ENCODE measurements at regions of chr1 and their contacts with region 1.

Region 1: GRCh38 chr1:52726265-52727113 is at the start of gene ZYG11B:
- DNase-seq: peak; percentile 93 to 99 (median 98)
- ATAC-seq: peak; percentile 97
- H3K4me3 ChIP-seq: peak within 1 kb of the TSS; percentile 79
- H3K27ac ChIP-seq: peak within 1 kb of the TSS; percentile 71
- H3K4me1 ChIP-seq: peaks cover 11 to 15% of the 10 kb centered on the region in 2 experiments; a peak in 4 of 5 replicates
- H3K27me3 ChIP-seq: no peaks in the 10 kb centered on the region
- CTCF ChIP-seq: 0 out of 6 replicates have a peak, but pooled peaks of 1 of the 3 experiments have one; percentile 6
- EP300 ChIP-seq: no peak
- POLR2A ChIP-seq: peak; percentile 82
- RAD21 ChIP-seq: no peak
- polyA plus RNA-seq, gene ZYG11B: 4.9 to 6.1 TPM

Region 2: GRCh38 chr1:52691821-52692220 is 34.7 kb before region 1 on chr1:
- CTCF ChIA-PET with region 1: no interaction called
- POLR2A ChIA-PET with region 1: no interaction called
- in situ Hi-C with region 1: no loop called
- intact Hi-C with region 1: no loop called
- DNase-seq: no peak
- ATAC-seq: no peak
- H3K4me3 ChIP-seq: no peak overlapping the region
- H3K27ac ChIP-seq: no peak overlapping the region
- H3K4me1 ChIP-seq: peaks cover 0 to 2% of the 10 kb centered on the region in 2 experiments; a peak in 2 of 5 replicates
- H3K27me3 ChIP-seq: no peaks in the 10 kb centered on the region
- CTCF ChIP-seq: no peak
- EP300 ChIP-seq: no peak
- POLR2A ChIP-seq: no peak
- RAD21 ChIP-seq: no peak

Region 3: DNA sequence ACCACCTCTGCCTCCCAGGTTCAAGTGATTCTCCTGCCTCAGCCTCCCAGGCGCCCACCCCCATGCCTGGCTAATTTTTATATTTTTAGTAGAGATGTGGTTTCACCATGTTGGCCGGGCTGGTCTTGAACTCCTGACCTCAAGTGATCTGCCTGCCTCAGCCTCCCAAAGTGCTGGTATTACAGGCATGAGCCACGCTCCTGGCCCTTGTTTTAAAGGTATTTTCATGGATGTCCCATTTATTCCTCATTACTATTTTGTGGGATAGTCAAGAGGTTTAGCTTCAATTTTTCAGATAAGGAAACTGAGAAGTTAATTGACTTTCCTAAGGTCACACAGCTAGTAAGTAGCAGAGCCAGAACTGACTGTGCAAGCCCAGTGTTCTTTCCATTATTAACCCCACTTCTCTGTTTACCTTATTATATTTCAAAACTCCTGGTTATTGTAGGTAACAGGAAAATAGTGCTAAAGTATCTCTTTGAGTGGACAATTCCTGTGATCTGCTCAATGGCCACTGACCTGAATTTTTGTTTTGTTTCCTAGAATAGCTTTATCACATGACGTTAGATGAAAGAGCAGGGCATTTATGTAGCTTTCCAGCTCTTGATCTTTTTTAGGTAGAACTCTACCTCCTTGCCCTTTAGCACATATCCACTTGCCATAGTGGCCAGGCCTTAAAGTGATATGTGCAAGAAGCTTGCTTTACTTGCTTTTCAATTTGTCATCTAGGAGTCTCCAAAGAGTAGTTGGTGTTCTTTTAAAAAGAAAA is 13.4 kb after region 1 on chr1:
- CTCF ChIA-PET with region 1: no interaction called
- POLR2A ChIA-PET with region 1: interaction called, 15 read pairs
- in situ Hi-C with region 1: no loop called
- intact Hi-C with region 1: no loop called
- DNase-seq: no peak
- ATAC-seq: no peak
- H3K4me3 ChIP-seq: no peak overlapping the region
- H3K27ac ChIP-seq: no peak overlapping the region
- H3K4me1 ChIP-seq: peaks cover 12 to 13% of the 10 kb centered on the region in 2 experiments; a peak in 4 of 5 replicates
- H3K27me3 ChIP-seq: no peaks in the 10 kb centered on the region
- CTCF ChIP-seq: no peak
- EP300 ChIP-seq: no peak
- POLR2A ChIP-seq: no peak
- RAD21 ChIP-seq: no peak

Region 4: DNA sequence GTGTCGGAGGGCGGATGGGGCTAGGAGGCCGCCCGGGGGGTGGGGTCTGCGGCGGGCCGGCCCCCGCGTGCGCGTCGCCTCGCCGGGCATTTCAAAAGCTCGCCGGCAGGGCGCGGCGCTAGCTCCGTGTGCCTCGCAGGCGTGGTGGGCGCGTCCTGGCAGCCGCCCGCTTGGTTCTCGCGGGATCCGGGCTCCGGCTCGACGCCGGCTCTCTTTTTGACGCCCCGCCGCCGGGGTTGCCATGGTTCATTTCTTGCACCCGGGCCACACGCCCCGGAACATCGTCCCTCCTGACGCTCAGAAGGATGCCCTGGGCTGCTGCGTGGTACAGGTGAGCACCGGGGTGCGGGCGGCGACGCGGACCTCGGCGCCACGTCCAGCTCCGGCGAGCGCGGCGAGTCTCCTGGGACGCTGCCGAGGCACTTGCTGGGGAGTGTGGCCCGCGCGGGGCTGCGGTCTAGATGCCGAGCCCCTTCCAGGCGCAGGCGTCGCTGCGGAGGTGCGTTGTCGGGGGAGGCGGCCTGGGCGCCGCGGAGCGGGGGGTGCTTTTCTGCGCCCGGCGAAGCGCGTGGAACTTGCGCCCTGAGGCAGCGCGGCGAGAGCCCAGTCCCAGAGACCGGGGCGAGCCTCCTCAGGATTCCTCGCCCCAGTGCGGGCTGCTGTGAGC is 116.3 kb after region 1 on chr1 and contains the start of gene ZYG11A:
- CTCF ChIA-PET with region 1: no interaction called
- POLR2A ChIA-PET with region 1: interaction called, 3 read pairs
- in situ Hi-C with region 1: no loop called
- intact Hi-C with region 1: loop called (anchors 10 kb)
- DNase-seq: peak; percentile 95 to 97 (median 96)
- ATAC-seq: peak; percentile 91
- H3K4me3 ChIP-seq: peak within 1 kb of the TSS; percentile 66
- H3K27ac ChIP-seq: peak within 1 kb of the TSS; percentile 94
- H3K4me1 ChIP-seq: peaks cover 4 to 21% of the 10 kb centered on the region in 2 experiments; a peak in 4 of 5 replicates
- H3K27me3 ChIP-seq: no peaks in the 10 kb centered on the region
- CTCF ChIP-seq: peak; percentile 51 to 67 (median 63); a peak in 4 of 6 replicates
- EP300 ChIP-seq: no peak
- POLR2A ChIP-seq: peak; percentile 85
- RAD21 ChIP-seq: peak; percentile 24 to 32; a peak in 3 of 4 replicates
- polyA plus RNA-seq, gene ZYG11A: 4.5 to 4.6 TPM